Endothelial cell of umbilical vein (primary cell): ENCODE measurements at regions of chr14 and their contacts with region 1.

Region 1: GRCh38 chr14:67359775-67360648 is at the starts of genes ATP6V1D and EIF2S1:
- DNase-seq: peak; percentile 99
- H3K4me3 ChIP-seq: peak within 1 kb of the TSS; percentile 75 to 83 (median 83)
- H3K27ac ChIP-seq: peak within 1 kb of the TSS; percentile 96
- H3K4me1 ChIP-seq: peaks cover 35% of the 10 kb centered on the region
- H3K27me3 ChIP-seq: no peaks in the 10 kb centered on the region
- CTCF ChIP-seq: peak; percentile 81 to 98
- POLR2A ChIP-seq: peak; percentile 75
- total RNA-seq, gene ATP6V1D: 60.7 and 63.1 TPM in 2 replicates
- total RNA-seq, gene EIF2S1: 130 and 135 TPM in 2 replicates

Region 2: DNA sequence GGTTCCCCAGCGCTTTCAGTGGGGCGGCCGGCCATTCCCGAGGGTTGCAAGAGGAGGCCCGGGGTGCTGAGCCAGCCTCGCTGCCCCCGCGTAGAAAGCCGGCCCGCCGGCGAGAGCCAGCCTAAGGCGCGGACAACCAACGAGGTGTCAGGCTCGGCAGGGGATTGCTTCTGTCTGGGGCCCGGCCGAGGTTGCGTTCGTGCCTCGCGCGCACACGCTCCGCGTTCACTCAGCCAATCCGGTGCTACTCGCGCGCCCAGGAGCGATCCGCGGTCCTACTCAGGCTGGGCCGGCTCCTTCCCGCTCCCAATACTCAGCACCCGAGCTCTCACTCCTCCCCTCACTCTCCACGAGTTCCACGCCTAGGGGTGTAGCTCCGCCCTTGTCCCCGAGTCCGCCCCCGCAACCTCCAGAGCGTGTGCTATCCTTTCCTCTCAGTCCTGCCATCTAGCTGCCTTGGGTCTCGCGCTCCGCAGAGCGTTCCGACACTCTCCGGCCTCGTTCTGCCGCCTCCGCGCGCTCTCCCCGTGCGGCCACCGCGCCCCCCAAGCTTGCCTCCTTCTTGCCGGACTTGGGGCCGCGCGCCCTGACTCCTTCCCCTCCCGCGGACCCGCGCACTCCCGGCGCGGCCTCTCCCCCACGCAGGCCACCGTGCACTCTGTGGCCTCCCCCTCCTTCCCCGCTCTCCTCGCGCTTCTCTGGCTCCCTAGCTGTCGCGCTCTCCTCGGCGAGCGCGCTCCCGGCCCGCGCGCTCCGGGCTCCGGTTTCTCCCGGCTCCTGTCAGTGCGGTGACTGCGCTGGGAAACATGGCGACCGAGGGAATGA is 852.1 kb before region 1 on chr14 and contains the start of gene GPHN:
- CTCF ChIA-PET with region 1: interaction called, 4 read pairs
- POLR2A ChIA-PET with region 1: no interaction called
- dilution Hi-C with region 1: no loop called
- intact Hi-C with region 1: loop called (anchors 5 kb)
- DNase-seq: peak; percentile 99
- H3K4me3 ChIP-seq: peak within 1 kb of the TSS; percentile 85 to 97 (median 93)
- H3K27ac ChIP-seq: peak within 1 kb of the TSS; percentile 27
- H3K4me1 ChIP-seq: peaks cover 14% of the 10 kb centered on the region
- H3K27me3 ChIP-seq: peaks cover 0 to 2% of the 10 kb centered on the region in 2 experiments
- CTCF ChIP-seq: peak in 1 of 2 donors; percentile 5
- POLR2A ChIP-seq: peak; percentile 95
- total RNA-seq, gene GPHN: 18.7 and 23.2 TPM in 2 replicates

Region 3: GRCh38 chr14:67166450-67166853 is 193.6 kb before region 1 on chr14:
- CTCF ChIA-PET with region 1: interaction called, 10 read pairs
- POLR2A ChIA-PET with region 1: no interaction called
- dilution Hi-C with region 1: no loop called
- intact Hi-C with region 1: loop called (anchors 1 kb)
- DNase-seq: peak; percentile 60
- H3K4me3 ChIP-seq: no peak overlapping the region
- H3K27ac ChIP-seq: no peak overlapping the region
- H3K4me1 ChIP-seq: no peaks in the 10 kb centered on the region
- H3K27me3 ChIP-seq: no peaks in the 10 kb centered on the region
- CTCF ChIP-seq: peak; percentile 53 to 60
- POLR2A ChIP-seq: no peak

Region 4: DNA sequence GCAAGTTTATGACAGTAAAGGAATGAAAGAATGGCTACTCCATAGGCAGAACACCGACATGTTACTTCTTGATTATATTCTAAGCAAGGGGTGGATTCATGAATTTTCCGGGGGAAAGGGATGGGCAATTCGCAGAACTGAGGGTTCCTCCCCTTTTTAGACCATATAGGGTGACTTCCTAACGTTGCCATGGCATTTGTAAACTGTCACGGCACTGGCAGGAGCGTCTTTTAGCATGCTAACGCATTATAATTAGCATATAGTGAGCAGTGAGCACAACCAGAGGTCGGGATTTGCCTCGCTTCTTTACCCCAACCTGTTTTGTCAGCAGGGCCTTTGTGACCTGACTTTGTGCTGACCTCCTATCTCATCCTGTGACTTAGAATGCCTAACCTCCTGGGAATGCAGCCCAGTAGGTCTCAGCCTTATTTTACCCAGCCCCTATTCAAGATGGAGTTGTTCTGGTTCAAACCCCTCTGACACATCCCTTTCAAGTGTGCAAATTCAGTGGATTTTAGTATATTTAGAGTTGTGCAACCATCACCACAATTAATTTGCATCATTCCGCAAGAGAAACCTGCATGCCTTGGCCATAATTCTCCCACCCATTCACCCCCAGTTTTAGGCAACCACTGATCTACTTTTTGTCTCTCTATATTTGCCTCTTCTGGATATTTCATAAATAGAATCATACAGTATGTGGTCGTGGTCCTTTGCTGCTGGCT is 91.4 kb before region 1 on chr14:
- CTCF ChIA-PET with region 1: no interaction called
- POLR2A ChIA-PET with region 1: no interaction called
- dilution Hi-C with region 1: no loop called
- intact Hi-C with region 1: no loop called
- DNase-seq: peak; percentile 18
- H3K4me3 ChIP-seq: peak overlapping the region in 1 of 3 experiments; percentile 29
- H3K27ac ChIP-seq: no peak overlapping the region
- H3K4me1 ChIP-seq: peaks cover 16% of the 10 kb centered on the region
- H3K27me3 ChIP-seq: no peaks in the 10 kb centered on the region
- CTCF ChIP-seq: no peak
- POLR2A ChIP-seq: no peak

Region 5: GRCh38 chr14:67373347-67373746 is 13.3 kb after region 1 on chr14:
- CTCF ChIA-PET with region 1: interaction called, 19 read pairs
- POLR2A ChIA-PET with region 1: no interaction called
- dilution Hi-C with region 1: no loop called
- intact Hi-C with region 1: no loop called
- DNase-seq: peak; percentile 23
- H3K4me3 ChIP-seq: no peak overlapping the region
- H3K27ac ChIP-seq: peak overlapping the region; percentile 39
- H3K4me1 ChIP-seq: peaks cover 31% of the 10 kb centered on the region
- H3K27me3 ChIP-seq: no peaks in the 10 kb centered on the region
- CTCF ChIP-seq: no peak
- POLR2A ChIP-seq: no peak

Region 6: DNA sequence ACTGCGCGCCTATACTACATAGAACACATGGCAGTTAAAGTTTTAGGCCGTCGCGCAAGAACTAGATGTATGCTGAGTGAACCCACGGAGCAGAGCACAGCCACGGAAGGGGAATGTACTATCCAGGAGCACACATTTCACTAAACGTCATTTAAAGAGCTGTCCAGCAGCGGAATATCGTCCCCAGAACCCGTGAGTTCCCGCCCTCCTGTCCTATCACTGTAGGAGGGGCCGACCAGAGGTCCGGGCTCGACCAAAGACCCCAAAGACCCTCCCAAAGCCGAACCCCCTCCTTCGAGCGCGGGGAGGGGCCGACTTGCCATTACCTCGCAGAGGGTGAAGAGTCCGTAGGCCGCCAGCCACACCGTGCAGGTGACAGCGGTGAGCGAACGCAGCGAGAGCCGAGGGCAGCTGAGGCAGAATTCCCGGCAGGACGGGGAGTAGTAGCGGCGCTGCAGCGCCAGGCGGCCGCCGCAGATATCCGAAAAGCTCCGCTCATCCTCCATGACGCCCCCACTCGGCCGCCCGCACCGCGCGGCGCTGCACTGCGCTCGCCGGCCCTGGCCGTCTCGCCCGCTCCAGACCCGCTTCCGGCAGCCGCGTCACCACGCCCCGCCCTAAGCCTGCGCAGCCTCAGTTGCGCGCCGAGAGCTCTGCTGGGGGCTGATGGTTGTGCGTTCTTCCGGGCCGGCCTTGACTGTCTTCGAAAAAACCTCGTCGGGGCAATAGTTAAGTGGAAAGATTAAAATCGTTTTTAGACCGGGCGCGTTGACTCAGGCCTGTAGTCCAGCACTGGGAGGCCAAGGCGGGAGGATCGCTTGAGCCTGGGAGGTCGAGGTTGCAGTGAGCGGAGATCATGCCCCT is 239.9 kb after region 1 on chr14 and contains the start of gene PIGH:
- CTCF ChIA-PET with region 1: no interaction called
- POLR2A ChIA-PET with region 1: no interaction called
- dilution Hi-C with region 1: no loop called
- intact Hi-C with region 1: no loop called
- DNase-seq: peak; percentile 88
- H3K4me3 ChIP-seq: peak within 1 kb of the TSS; percentile 33 to 60 (median 54)
- H3K27ac ChIP-seq: no peak within 1 kb of the TSS
- H3K4me1 ChIP-seq: peaks cover 6% of the 10 kb centered on the region
- H3K27me3 ChIP-seq: peaks cover 0 to 4% of the 10 kb centered on the region in 2 experiments
- CTCF ChIP-seq: peak; percentile 41 to 80
- POLR2A ChIP-seq: peak; percentile 80
- total RNA-seq, gene PIGH: 9.9 and 12.3 TPM in 2 replicates

Region 7: DNA sequence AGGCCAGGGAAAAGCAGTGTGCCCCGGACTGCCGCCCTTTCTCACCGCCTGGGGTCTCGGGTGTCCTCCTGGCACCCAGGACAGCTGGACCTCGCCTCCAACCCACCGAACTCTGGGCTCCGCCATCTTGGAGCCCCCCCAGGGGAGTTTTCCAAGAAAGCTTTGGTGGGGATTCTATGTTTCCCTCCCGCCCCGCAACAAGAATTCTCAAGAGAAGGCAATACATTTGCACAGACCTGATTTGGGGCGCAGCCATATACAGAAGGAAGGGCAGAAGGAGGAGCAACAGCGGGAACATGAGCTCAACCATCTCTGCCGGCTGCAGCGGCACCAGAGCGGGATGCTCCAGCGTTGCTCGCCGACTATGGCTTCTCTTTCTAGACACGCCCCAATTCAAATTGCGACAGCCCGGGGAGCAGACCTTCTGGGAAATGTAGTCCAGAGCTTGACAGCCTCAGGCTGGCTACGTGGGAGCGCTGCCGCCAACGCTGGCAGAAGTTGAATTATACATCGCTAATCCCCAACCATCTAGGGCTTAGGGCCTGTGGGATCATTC is 335.5 kb after region 1 on chr14 and contains the start of gene RDH11:
- CTCF ChIA-PET with region 1: interaction called, 5 read pairs
- POLR2A ChIA-PET with region 1: interaction called, 4 read pairs
- dilution Hi-C with region 1: no loop called
- intact Hi-C with region 1: loop called (anchors 1 kb)
- DNase-seq: peak; percentile 89
- H3K4me3 ChIP-seq: peak within 1 kb of the TSS; percentile 77 to 87 (median 78)
- H3K27ac ChIP-seq: peak within 1 kb of the TSS; percentile 61
- H3K4me1 ChIP-seq: peaks cover 10% of the 10 kb centered on the region
- H3K27me3 ChIP-seq: no peaks in the 10 kb centered on the region
- CTCF ChIP-seq: no peak
- POLR2A ChIP-seq: peak; percentile 94
- total RNA-seq, gene RDH11: 79.8 and 90.2 TPM in 2 replicates